Caco-2 (cell line): ENCODE measurements at regions of chr1 and their contacts with region 1.

Region 1: DNA sequence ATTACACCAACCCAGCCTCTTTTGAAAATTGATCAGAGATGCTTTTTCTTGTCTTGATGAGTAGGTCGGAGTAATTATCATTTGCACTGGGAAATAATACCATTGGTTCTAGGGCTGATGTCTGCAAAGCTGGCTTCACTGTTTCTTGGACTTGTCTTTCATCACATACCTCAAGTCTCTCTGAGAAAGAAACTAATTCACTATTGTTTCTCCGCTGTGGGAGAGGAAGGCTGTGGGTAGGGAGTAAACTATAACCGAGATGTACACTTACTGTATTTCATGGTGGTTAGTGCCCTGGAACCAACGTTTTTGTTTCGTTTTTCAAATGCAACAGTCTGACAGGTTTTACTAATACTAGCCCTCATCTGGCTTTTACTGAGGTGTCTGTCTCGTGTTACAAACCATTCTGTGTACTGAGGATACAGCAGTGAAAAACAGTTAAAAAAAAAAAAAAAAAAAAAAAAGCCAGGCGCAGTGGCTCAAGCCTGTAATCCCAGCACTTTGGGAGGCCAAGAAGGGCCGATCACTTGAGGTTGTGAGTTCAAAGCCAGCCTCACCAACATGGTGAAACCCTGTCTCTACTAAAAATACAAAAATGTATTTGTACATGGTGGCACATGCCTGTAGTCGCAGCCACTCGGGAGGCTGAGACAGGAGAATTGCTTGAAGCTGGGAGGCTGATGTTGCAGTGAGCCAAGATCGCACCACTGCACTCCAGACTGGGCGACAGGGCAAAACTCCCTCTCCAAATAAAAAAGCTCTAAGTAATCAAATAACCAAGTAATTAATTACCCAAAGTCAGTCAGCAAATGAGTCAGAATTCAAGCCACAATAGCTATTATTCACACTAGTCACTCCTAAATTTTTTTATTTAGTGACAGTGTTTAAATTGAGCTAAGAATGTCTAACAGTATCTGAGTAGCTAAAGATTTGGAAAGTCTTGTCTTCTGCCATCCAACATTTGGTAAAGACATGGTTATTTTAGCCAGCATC is 23.3 kb downstream of the TOMM20 start:
- DNase-seq: no peak
- H3K4me3 ChIP-seq: no peak overlapping the region
- H3K4me3 Mint-ChIP-seq: peak overlapping the region; percentile 72
- H3K27ac Mint-ChIP-seq: peak overlapping the region; percentile 90
- H3K4me1 ChIP-seq: peaks cover 12% of the 10 kb centered on the region; the same call in 1 of the 2 replicates
- H3K4me1 Mint-ChIP-seq: peaks cover 16% of the 10 kb centered on the region
- H3K27me3 ChIP-seq: no peaks in the 10 kb centered on the region
- H3K27me3 Mint-ChIP-seq: no peaks in the 10 kb centered on the region
- CTCF ChIP-seq: no peak

Region 2: DNA sequence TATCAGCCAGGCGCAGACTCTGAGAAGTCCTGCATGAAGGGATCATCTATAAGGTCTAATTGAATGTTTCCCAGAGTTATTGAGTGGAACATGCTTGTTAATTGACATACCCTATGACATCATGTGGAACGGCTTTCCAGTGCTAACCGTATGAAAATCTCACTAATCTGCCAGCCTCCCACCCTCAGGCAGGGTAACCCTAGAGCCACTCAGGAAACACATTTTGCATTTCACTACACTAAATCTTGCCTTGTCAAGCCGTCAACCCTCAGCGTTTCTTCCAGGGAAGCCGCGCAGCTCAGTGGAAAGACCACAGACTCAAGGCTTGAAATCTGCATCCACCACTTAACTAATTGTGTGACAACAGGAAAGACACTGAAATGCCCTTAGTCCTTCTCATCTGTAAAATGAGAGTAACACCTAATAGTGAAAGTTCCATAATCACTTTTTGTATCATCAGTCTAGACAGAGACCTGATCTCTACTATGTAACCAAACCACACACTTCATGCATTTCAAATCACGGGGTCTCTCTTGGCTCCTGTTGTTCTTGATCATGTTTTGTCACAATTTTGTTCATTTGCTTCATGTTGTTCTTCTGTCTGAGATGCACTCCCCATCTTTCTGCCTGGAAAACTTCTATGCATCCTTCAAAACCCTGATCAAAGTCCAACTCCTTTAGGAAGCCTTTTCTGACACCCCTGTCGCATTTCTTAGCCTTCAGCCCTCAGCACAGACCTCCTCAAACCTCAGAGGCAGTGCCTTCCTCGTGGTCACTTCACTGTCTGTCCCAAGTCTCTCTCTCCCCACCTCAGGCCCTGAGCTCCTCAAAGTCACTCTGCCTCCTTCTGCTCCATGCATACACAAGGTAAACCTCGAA is 223.2 kb before region 1 on chr1:
- CTCF ChIA-PET with region 1: interaction called, 11 read pairs
- POLR2A ChIA-PET with region 1: no interaction called
- intact Hi-C with region 1: no loop called
- DNase-seq: no peak
- H3K4me3 ChIP-seq: no peak overlapping the region
- H3K4me3 Mint-ChIP-seq: no peak overlapping the region
- H3K27ac Mint-ChIP-seq: no peak overlapping the region
- H3K4me1 ChIP-seq: peaks cover 13% of the 10 kb centered on the region
- H3K4me1 Mint-ChIP-seq: peaks cover 22% of the 10 kb centered on the region
- H3K27me3 ChIP-seq: no peaks in the 10 kb centered on the region
- H3K27me3 Mint-ChIP-seq: no peaks in the 10 kb centered on the region
- CTCF ChIP-seq: no peak

Region 3: DNA sequence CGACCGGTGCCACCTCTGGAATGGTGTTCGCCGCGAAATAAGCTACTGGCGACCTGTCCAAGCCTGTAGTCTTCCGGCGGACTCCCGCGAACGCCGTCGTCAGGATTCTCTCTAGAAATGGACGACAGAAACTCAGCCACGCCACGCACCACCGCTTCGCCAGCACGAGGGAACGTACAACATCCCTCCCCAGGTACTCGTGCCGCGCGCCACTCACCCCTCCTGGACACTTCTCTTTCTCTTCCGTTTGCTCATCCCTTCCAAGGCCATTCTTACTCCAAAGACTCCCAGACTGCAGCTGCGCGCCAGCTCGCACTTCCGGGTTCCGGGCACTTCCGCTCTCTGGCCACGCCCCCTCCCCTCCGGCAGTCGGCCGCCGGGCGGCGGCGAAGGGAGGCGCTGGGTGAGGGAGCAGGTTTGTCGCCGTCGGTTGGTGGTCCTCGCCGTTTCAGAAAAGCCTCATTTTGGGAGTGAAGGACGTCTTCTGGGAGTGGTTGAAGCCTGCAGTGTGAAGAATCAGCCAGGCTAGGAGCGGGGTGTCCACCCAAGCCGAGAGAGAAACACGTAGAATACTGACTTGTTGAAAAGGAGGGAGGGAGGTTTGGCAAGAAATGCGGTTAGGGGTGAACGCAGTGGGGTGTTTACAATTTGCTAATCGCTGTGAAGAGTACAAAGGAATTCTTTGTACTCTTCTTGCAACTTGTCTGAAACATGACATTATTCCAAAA is 55.8 kb after region 1 on chr1 and contains the start of gene RBM34:
- CTCF ChIA-PET with region 1: no interaction called
- POLR2A ChIA-PET with region 1: no interaction called
- intact Hi-C with region 1: loop called (anchors 2 kb)
- DNase-seq: peak; percentile 92 to 96
- H3K4me3 ChIP-seq: peak within 1 kb of the TSS; percentile 50
- H3K4me3 Mint-ChIP-seq: peak within 1 kb of the TSS; percentile 98
- H3K27ac Mint-ChIP-seq: peak within 1 kb of the TSS; percentile 99
- H3K4me1 ChIP-seq: peaks cover 14% of the 10 kb centered on the region; the same call in 1 of the 2 replicates
- H3K4me1 Mint-ChIP-seq: peaks cover 12% of the 10 kb centered on the region
- H3K27me3 ChIP-seq: no peaks in the 10 kb centered on the region
- H3K27me3 Mint-ChIP-seq: no peaks in the 10 kb centered on the region
- CTCF ChIP-seq: peak in 1 of 2 experiments; percentile 28
- total RNA-seq, gene RBM34: 96.5 and 103 TPM in 2 replicates